ENCODE measurements at regions of chr13 and their contacts with region 1.

Region 1: DNA sequence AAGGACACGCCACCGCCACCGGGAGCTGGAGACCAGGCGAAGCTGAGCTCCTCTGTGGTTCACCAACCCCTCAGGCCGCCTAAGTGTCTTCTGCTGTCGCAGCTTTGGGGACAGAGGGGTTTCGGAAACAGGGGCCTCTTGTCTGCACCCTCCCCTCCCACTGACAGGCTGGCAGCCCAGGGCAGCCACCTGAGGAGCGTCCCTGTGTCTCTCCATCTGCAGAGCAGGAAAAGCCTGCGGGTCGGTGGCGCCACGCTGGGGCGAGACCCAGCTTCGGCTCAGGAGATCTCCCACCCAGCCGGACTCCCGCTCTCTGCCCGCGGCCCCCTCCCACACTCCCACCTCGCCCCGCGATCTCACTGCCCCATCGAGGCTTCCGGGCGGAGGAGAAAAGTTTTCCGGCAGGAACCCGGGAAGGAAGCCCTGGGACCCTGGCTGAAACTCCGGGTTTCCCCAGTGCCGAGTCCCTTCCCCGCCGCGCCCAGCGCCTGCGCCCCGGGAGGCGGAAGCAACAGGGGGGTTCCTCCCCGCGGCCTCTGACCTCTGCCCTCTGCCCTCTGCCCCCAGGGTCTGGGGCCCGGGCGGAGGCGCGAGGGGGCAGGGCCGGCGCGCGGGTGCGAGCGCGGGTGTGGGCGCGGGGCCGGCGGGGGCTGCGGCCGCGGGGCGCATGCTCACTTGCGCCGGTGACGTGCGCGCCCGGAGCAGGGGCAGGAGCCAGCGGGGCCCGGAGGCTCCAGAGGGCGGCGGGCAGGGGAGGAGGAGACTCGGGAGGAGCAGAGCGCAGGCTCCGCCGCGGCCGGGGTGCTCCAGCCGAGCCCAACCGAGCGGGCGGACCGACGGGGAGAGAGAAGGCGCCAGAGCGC is at the start of gene ATP11A:
- DNase-seq: no peak
- ATAC-seq: peak; percentile 73
- H3K4me3 ChIP-seq: peak within 1 kb of the TSS; percentile 77
- H3K27ac ChIP-seq: peak within 1 kb of the TSS; percentile 64
- H3K4me1 ChIP-seq: peaks cover 27% of the 10 kb centered on the region
- H3K27me3 ChIP-seq: no peaks in the 10 kb centered on the region
- CTCF ChIP-seq: peak in 2 of 3 experiments; percentile 5 to 11; a peak in 2 of 6 replicates
- EP300 ChIP-seq: 0 out of 4 replicates have a peak, but pooled peaks of 1 of the 2 experiments have one; percentile 7
- POLR2A ChIP-seq: peak; percentile 88
- RAD21 ChIP-seq: no peak
- polyA plus RNA-seq, gene ATP11A: 1.4 to 2.1 TPM

Region 2: DNA sequence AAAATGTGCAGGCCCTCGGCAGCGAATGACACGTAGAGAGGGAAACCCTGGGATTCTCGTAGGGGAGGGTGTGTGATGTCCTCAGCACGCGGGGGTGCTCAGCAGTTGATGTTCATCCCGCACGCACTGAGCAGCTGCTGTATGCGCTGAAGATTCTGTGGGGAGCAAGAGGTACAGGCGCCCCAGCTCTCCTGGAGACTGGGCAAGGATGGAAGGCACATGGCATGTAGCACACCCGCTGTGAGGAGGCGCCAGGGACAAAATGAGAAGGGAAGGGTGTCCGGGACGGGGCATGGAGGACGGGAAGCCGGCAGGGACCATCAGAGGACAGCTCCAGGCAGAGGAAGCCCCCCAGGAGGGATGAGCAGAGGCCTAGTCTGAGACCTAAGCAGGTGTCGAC is 15.8 kb after region 1 on chr13:
- CTCF ChIA-PET with region 1: interaction called, 3 read pairs
- POLR2A ChIA-PET with region 1: no interaction called
- RAD21 ChIA-PET with region 1: no interaction called
- SMC1A ChIA-PET with region 1: interaction called, 10 read pairs
- in situ Hi-C with region 1: no loop called
- intact Hi-C with region 1: no loop called
- DNase-seq: no peak
- ATAC-seq: no peak
- H3K4me3 ChIP-seq: no peak overlapping the region
- H3K27ac ChIP-seq: no peak overlapping the region
- H3K4me1 ChIP-seq: no peaks in the 10 kb centered on the region
- H3K27me3 ChIP-seq: no peaks in the 10 kb centered on the region
- CTCF ChIP-seq: no peak
- EP300 ChIP-seq: no peak
- POLR2A ChIP-seq: no peak
- RAD21 ChIP-seq: no peak

Region 3: GRCh38 chr13:112767506-112768471 is 78.3 kb after region 1 on chr13:
- CTCF ChIA-PET with region 1: no interaction called
- POLR2A ChIA-PET with region 1: no interaction called
- RAD21 ChIA-PET with region 1: interaction called, 4 read pairs
- SMC1A ChIA-PET with region 1: interaction called, 3 read pairs
- in situ Hi-C with region 1: no loop called
- intact Hi-C with region 1: loop called (anchors 1 kb)
- DNase-seq: peak; percentile 17
- ATAC-seq: peak; percentile 89
- H3K4me3 ChIP-seq: peak overlapping the region; percentile 58; the same call in 1 of the 2 replicates
- H3K27ac ChIP-seq: peak overlapping the region; percentile 78
- H3K4me1 ChIP-seq: peaks cover 19% of the 10 kb centered on the region
- H3K27me3 ChIP-seq: no peaks in the 10 kb centered on the region
- CTCF ChIP-seq: no peak
- EP300 ChIP-seq: peak in 1 of 2 experiments; percentile 69; a peak in 2 of 4 replicates
- POLR2A ChIP-seq: no peak
- RAD21 ChIP-seq: no peak

Region 4: DNA sequence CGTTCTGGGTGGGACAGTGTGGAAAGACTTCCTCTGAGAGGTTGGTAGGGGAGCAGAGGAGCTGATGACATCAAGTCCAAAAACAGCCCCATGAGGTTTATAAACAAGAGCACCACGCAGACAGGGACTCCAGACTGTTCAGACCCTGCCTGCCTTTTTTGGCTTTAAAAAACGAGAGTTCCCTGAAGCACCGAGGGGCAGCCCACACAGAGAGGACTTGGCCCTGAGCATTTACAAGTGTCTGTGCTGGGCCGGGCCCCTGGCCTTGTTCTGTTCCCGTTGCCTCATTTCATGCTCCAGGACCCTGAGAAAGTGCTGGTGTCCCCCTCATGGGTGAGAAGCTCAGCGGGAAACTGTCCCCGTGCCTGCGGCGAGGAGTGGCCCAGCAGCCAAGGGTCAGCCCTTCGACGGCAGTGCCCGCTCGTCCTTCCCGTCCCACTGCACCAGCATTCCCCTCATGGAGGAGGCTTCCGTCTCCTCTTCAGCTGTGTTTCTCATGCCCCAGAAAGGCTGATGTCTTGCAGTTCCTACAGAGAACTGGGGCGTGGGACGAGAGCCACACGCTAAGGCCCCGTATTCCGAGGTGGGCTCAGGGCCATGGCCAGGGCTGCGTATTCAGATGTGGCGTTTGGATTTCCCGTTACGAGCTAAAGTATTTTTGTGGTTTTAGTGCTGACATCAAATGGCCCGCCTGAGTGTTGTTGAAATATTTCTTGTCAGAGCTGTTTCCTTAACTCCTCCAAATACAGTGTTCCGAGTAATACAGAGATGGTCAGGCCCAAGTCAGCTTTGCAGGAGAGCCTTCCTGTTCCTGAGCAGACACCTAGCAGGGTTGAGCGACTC is 93.8 kb after region 1 on chr13:
- CTCF ChIA-PET with region 1: no interaction called
- POLR2A ChIA-PET with region 1: no interaction called
- RAD21 ChIA-PET with region 1: no interaction called
- SMC1A ChIA-PET with region 1: no interaction called
- in situ Hi-C with region 1: no loop called
- intact Hi-C with region 1: no loop called
- DNase-seq: no peak
- ATAC-seq: no peak
- H3K4me3 ChIP-seq: no peak overlapping the region
- H3K27ac ChIP-seq: no peak overlapping the region
- H3K4me1 ChIP-seq: peaks cover 6% of the 10 kb centered on the region
- H3K27me3 ChIP-seq: no peaks in the 10 kb centered on the region
- CTCF ChIP-seq: no peak
- EP300 ChIP-seq: no peak
- POLR2A ChIP-seq: no peak
- RAD21 ChIP-seq: no peak

Region 5: GRCh38 chr13:112803422-112803821 is 113.9 kb after region 1 on chr13:
- CTCF ChIA-PET with region 1: interaction called, 3 read pairs
- POLR2A ChIA-PET with region 1: interaction called, 3 read pairs
- RAD21 ChIA-PET with region 1: interaction called, 5 read pairs
- SMC1A ChIA-PET with region 1: interaction called, 4 read pairs
- in situ Hi-C with region 1: no loop called
- intact Hi-C with region 1: loop called (anchors 2 kb)
- DNase-seq: peak; percentile 70
- ATAC-seq: peak; percentile 72
- H3K4me3 ChIP-seq: peak overlapping the region; percentile 42; the same call in 1 of the 2 replicates
- H3K27ac ChIP-seq: peak overlapping the region; percentile 91
- H3K4me1 ChIP-seq: peaks cover 16% of the 10 kb centered on the region; the same call in 1 of the 2 replicates
- H3K27me3 ChIP-seq: no peaks in the 10 kb centered on the region
- CTCF ChIP-seq: no peak
- EP300 ChIP-seq: no peak; a peak in 1 of 4 replicates
- POLR2A ChIP-seq: no peak
- RAD21 ChIP-seq: no peak

Region 6: DNA sequence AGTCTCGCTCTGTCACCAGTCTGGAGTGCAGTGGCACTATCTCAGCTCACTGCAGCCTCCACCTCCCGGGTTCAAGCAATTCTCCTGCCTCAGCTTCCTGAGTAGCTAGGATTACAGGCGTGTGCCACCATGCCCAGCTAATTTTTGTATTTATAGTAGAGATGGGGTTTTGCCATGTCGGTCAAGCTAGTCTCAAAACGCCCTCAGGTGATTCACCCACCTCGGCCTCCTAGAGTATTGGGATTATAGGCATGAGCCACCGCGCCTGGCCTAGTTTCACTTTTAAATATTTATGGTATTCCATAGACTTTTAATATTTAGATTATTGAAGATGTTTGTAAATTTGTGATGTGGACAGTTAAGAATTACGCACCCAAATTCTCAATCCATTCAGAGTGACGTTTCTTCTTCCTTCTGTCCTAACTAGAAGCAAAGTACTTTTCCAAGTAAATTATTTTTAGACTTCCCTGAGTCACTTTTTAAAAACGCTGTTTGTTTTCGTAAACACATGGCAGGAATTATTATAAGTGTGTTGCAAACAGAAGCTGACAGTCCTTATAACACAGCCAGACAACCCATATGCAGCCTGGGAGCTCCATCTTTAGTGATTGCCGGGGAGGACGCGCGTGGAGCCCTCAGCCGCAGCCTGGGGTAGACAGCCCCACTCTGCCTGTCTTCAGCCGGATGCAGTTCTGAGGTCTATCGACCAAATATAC is 132.0 kb after region 1 on chr13:
- CTCF ChIA-PET with region 1: no interaction called
- POLR2A ChIA-PET with region 1: no interaction called
- RAD21 ChIA-PET with region 1: no interaction called
- SMC1A ChIA-PET with region 1: no interaction called
- in situ Hi-C with region 1: no loop called
- intact Hi-C with region 1: no loop called
- DNase-seq: no peak
- ATAC-seq: no peak
- H3K4me3 ChIP-seq: no peak overlapping the region
- H3K27ac ChIP-seq: no peak overlapping the region
- H3K4me1 ChIP-seq: no peaks in the 10 kb centered on the region
- H3K27me3 ChIP-seq: no peaks in the 10 kb centered on the region
- CTCF ChIP-seq: no peak
- EP300 ChIP-seq: no peak
- POLR2A ChIP-seq: no peak
- RAD21 ChIP-seq: no peak